Transverse colon (tissue), 4 donors: ENCODE measurements at regions of chr1 and their contacts with region 1.

Region 1: GRCh38 chr1:203273206-203273868 is 32.0 kb upstream of the BTG2 start:
- DNase-seq: peak; percentile 92
- H3K4me3 ChIP-seq: peak overlapping the region in 2 of 4 donors; percentile 25 to 30
- H3K27ac ChIP-seq: peak overlapping the region; percentile 83 to 89 (median 87)
- H3K4me1 ChIP-seq: peaks cover 33 to 73% (median 49%) of the 10 kb centered on the region in 4 donors
- H3K27me3 ChIP-seq: no peaks in the 10 kb centered on the region
- CTCF ChIP-seq: peak; percentile 97 to 100 (median 99)
- EP300 ChIP-seq: no peak
- POLR2A ChIP-seq: no peak

Region 2: DNA sequence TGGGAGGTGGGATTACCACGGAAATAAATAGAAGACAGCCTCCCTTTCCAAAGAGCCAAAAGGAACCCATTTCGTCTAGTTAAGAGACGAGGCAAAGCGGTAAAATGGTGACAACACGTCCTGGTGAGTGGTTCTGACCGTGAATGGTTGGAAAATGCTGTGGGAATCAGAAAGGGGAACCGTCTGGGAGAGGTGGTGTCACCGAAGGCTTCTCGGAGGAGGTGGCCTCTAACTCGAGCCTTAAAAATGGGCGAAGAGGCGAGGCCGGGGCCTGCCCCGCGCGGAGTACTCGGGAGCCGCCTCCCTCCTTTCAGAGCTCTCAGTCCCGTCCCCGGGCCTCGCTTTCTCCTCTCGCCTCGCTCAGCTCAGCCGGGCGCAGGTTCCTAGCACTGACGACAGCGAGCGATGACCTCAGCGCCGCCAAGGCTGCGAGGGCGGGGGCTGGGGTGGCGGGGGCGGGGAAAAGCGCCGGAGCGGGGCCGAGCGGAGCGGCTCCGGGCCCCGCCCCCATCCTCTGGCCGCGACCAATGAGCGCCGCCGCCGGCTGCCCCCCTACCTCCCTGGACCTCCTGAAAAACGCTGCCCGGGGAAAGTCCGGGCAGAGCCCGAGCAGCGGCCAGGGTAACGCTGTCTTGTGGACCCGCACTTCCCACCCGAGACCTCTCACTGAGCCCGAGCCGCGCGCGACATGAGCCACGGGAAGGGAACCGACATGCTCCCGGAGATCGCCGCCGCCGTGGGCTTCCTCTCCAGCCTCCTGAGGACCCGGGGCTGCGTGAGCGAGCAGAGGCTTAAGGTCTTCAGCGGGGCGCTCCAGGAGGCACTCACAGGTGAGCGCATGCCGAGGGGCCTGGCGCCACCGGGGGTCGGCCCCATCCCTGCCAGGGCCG is 31.8 kb after region 1 on chr1 and contains the start of gene BTG2:
- in situ Hi-C with region 1: no loop called
- intact Hi-C with region 1: loop called (anchors 1 kb)
- DNase-seq: peak; percentile 96
- H3K4me3 ChIP-seq: peak within 1 kb of the TSS; percentile 76 to 98 (median 88)
- H3K27ac ChIP-seq: peak within 1 kb of the TSS; percentile 95 to 99 (median 98)
- H3K4me1 ChIP-seq: peaks cover 13 to 43% (median 39%) of the 10 kb centered on the region in 4 donors
- H3K27me3 ChIP-seq: no peaks in the 10 kb centered on the region
- CTCF ChIP-seq: no peak
- EP300 ChIP-seq: peak; percentile 23
- POLR2A ChIP-seq: peak; percentile 100
- total RNA-seq, gene BTG2: 98.9 to 144 (median 142) TPM

Region 3: DNA sequence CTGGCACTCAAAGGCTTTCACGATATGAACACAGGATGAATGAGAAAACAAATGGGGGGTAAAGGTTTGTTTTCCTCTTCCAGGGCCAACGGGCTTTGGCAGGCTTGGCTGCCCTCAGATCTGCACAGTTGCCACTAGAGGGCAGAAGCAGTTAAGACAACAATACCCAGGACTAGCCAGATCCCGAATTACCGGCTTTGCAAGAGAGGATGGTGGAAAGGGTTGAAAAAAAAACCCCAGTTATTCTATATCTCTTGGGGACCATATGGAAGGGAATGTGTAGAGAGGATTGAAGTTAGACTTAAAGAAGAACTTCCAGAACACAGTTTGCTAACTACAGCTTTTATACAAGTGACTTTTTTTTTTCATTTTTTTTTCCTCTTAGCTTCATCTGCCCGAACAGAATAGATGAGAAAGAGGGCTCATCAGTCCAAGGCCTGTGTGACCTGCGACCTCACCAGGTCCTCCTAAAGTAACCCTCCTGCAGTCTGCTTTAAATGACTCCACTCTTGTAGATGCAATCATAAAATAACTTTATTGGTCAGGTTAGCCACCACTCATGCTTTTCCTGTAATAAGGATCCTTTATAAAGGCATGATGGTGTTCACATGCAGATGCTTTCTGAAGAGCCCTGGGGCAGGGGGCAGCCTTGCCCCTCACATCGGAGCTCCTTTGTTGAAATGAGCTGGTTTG is 66.9 kb after region 1 on chr1:
- in situ Hi-C with region 1: loop called in 3 of 4 experiments (anchors 5 kb)
- intact Hi-C with region 1: loop called (anchors 2 kb)
- DNase-seq: peak; percentile 79
- H3K4me3 ChIP-seq: no peak overlapping the region
- H3K27ac ChIP-seq: no peak overlapping the region
- H3K4me1 ChIP-seq: peaks cover 3 to 29% (median 11%) of the 10 kb centered on the region in 4 donors
- H3K27me3 ChIP-seq: no peaks in the 10 kb centered on the region
- CTCF ChIP-seq: peak; percentile 87 to 97 (median 88)
- EP300 ChIP-seq: no peak
- POLR2A ChIP-seq: no peak

Region 4: DNA sequence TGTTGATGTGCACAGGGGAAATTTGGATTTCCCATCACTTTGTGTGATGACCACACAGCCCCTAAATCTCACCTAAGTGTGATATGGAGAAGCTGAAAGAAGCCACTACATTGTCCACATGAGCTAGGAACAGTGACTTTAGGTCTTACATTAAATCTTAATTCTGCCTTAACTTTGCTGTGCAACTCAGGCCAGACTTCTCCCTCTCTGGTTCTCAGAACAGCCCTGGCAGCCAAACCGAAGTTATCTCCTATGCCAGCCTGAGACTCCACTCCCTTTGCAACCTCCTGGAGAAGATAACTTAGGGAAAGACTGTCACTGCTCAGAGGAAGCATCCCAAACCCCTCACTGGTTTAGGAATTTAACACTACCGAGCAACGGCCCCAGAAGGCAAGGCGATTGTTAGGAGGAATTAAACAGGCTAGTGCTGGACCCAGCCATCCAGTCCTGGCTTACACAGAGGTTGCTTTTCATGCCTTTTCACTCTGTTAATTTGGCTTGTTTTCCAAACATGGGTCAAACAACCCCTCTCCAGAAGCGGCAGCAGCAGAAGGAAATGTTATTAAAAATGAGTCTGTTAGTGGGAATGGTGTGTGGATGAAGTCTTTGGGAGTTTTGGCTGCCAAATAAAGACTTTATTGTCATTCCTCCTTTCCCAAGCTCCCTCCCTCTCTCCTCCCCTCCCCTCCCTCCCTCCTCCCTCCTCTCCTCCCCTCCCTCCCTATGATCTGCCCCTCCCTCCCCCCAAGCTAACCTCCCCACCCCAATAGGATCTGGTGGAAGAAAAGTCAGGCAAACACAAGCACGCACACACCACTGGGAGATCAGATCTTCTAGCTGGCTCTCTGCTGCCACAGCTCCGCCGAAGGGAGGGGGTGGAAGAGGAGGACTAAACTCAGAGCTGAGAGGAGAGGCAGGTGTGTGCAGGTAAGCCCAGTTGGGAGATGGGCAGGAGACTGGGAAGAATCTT is 202.0 kb after region 1 on chr1 and contains the start of gene PRELP:
- in situ Hi-C with region 1: loop called in 3 of 4 experiments (anchors 10 kb)
- intact Hi-C with region 1: loop called (anchors 5 kb)
- DNase-seq: peak; percentile 54
- H3K4me3 ChIP-seq: peak within 1 kb of the TSS; percentile 26 to 48 (median 32)
- H3K27ac ChIP-seq: peak within 1 kb of the TSS; percentile 75 to 89 (median 80)
- H3K4me1 ChIP-seq: peaks cover 0 to 24% (median 10%) of the 10 kb centered on the region in 4 donors
- H3K27me3 ChIP-seq: no peaks in the 10 kb centered on the region
- CTCF ChIP-seq: no peak
- EP300 ChIP-seq: no peak
- POLR2A ChIP-seq: peak; percentile 68
- total RNA-seq, gene PRELP: 15.4 to 35.2 (median 23.3) TPM

Region 5: DNA sequence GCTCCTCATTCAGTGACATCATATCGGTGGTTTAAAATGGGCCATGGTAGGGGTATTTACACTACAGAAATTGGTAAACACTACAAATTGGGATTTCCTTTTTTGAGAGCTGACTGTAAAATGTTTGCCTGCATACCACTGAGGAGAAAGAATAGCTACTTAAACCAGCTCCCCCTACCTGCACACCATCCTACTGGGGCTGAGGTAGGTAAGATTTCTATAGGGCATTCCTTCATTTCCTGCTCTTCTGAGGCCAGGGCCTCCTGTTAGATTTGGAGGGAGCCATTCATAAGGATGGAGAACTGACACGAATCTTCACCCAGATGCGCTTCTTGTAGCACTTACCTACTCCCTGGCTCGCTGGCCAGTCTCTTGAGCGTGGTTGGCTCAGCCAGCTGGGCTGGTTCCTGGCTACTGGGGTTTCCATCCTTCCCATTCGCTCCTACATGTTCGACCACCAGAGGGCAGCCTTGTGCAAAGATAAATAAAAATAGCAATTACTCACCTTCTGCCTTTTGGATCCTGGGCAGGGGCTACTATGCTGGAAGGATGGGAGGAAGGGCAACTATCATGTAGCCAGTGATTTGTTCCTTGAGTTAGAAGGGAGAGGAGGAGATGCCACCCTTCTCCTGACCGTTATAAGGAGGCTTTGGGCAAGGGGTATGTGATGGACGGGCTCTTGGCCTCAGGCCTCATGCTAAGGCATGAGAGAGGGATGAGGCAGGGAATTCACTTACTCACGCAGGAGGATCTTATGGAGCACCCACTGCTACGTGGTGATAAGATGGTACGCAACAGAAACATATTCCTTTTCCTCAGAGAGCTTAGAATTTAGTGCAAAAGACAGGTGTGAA is 231.3 kb after region 1 on chr1:
- in situ Hi-C with region 1: no loop called
- intact Hi-C with region 1: no loop called
- DNase-seq: peak; percentile 85
- H3K4me3 ChIP-seq: no peak overlapping the region
- H3K27ac ChIP-seq: peak overlapping the region in 3 of 4 donors; percentile 33 to 47 (median 43)
- H3K4me1 ChIP-seq: peaks cover 13 to 25% (median 15%) of the 10 kb centered on the region in 4 donors
- H3K27me3 ChIP-seq: no peaks in the 10 kb centered on the region
- CTCF ChIP-seq: peak; percentile 80 to 84 (median 84)
- EP300 ChIP-seq: no peak
- POLR2A ChIP-seq: no peak